ENCODE measurements at regions of chr7 and their contacts with region 1.

Region 1: GRCh38 chr7:155003376-155004214 is 671 bp upstream of the PAXIP1 start:
- DNase-seq: no peak
- H3K4me3 ChIP-seq: peak overlapping the region; percentile 62 to 96 (median 78)
- H3K27ac ChIP-seq: peak overlapping the region; percentile 74 to 89 (median 86)
- H3K4me1 ChIP-seq: peaks cover 14 to 42% (median 23%) of the 10 kb centered on the region in 4 donors
- H3K27me3 ChIP-seq: no peaks in the 10 kb centered on the region
- CTCF ChIP-seq: no peak
- EP300 ChIP-seq: no peak
- POLR2A ChIP-seq: peak; percentile 50

Region 2: GRCh38 chr7:154646126-154647013 is 357.2 kb before region 1 on chr7:
- intact Hi-C with region 1: no loop called
- DNase-seq: no peak
- H3K4me3 ChIP-seq: no peak overlapping the region
- H3K27ac ChIP-seq: no peak overlapping the region
- H3K4me1 ChIP-seq: no peaks in the 10 kb centered on the region
- H3K27me3 ChIP-seq: no peaks in the 10 kb centered on the region
- CTCF ChIP-seq: no peak
- EP300 ChIP-seq: no peak
- POLR2A ChIP-seq: no peak

Region 3: DNA sequence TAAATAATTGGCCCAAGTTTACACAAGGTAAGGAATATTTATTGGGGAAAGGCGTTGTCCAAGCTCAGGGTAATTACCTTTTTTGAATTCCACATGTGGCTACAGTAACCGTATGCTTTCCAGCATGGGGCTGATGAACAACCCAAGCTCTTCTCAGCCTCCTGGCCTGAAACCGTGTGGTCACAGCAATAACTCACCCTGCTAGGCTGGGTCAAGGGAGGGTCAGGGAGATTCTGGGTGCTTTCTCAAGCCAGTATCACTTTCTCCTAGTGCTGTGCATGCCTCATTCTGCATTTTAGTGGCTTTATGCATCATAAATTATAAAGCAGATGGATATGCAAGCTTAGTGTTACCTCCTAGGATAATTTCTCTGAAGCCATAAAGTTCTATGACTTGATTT is 274.5 kb before region 1 on chr7:
- intact Hi-C with region 1: no loop called
- DNase-seq: no peak
- H3K4me3 ChIP-seq: no peak overlapping the region
- H3K27ac ChIP-seq: no peak overlapping the region
- H3K4me1 ChIP-seq: no peaks in the 10 kb centered on the region
- H3K27me3 ChIP-seq: no peaks in the 10 kb centered on the region
- CTCF ChIP-seq: no peak
- EP300 ChIP-seq: no peak
- POLR2A ChIP-seq: no peak

Region 4: DNA sequence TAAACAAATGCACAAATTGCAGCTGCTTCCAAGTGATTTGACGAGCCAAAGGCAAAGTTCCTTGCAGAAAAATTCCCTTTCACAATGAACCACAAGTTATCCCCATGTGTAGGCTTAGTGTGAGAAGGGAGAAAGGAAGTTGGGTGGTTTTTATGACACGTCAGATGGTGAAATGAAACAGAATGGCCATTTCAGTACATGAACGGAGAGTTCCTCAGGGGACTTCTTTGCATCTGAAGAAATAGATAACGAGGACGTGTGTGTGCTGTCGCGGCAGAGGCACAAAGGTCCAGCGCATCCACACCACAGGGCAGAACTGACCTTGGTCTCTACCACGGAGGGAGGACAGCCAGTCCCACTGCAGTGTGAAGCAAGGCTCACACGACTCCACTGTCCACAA is 136.5 kb before region 1 on chr7:
- intact Hi-C with region 1: no loop called
- DNase-seq: no peak
- H3K4me3 ChIP-seq: no peak overlapping the region
- H3K27ac ChIP-seq: no peak overlapping the region
- H3K4me1 ChIP-seq: no peaks in the 10 kb centered on the region
- H3K27me3 ChIP-seq: peaks cover 0 to 10% (median 0%) of the 10 kb centered on the region in 4 donors
- CTCF ChIP-seq: no peak
- EP300 ChIP-seq: no peak
- POLR2A ChIP-seq: no peak

Region 5: GRCh38 chr7:155298834-155299534 is 295.4 kb after region 1 on chr7:
- intact Hi-C with region 1: loop called (anchors 10 kb)
- DNase-seq: peak; percentile 99
- H3K4me3 ChIP-seq: peak overlapping the region; percentile 76 to 98 (median 87)
- H3K27ac ChIP-seq: peak overlapping the region; percentile 89 to 98 (median 94)
- H3K4me1 ChIP-seq: peaks cover 25 to 33% (median 30%) of the 10 kb centered on the region in 4 donors
- H3K27me3 ChIP-seq: peaks cover 0 to 6% (median 0%) of the 10 kb centered on the region in 4 donors
- CTCF ChIP-seq: peak in 1 of 3 experiments; percentile 3
- EP300 ChIP-seq: no peak
- POLR2A ChIP-seq: no peak

Measured in esophagus muscularis mucosa (tissue), 4 donors.